Calu3 (cell line): ENCODE measurements at regions of chr15 and their contacts with region 1.

Region 1: GRCh38 chr15:65791335-65792129 is 561 bp downstream of the DENND4A start:
- DNase-seq: peak; percentile 49
- H3K4me3 Mint-ChIP-seq: peak overlapping the region; percentile 90
- H3K27ac Mint-ChIP-seq: peak overlapping the region; percentile 95
- H3K4me1 Mint-ChIP-seq: peaks cover 32% of the 10 kb centered on the region
- H3K27me3 Mint-ChIP-seq: no peaks in the 10 kb centered on the region
- CTCF ChIP-seq: no peak

Region 2: DNA sequence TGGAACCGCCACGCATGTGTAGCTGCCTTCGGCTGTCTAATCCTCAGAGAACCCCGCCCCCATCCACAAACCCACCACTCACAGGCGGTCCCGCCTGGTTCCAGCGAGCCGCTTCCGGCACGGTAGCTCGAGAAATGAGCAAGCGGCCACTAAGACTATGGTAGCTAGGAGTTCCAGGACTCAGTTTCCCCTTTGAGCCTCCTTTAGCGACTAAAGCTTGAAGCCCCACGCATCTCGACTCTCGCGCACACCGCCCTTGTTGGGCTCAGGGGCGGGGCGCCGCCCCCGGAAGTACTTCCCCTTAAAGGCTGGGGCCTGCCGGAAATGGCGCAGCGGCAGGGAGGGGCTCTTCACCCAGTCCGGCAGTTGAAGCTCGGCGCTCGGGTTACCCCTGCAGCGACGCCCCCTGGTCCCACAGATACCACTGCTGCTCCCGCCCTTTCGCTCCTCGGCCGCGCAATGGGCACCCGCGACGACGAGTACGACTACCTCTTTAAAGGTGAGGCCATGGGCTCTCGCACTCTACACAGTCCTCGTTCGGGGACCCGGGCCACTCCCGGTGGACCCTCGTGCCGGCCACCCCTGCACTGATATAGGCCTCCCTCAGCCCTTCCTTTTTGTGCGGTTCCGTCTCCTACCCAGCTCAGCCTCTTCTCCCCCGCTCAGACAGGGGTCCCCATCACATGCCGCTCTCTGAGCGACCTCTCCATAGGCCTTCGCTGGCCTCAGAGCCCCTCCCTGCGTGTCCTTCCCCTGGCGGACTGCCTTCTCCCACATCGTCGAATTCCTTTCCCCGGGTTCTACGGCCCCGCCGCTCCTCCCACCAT is 77.8 kb after region 1 on chr15 and contains the start of gene RAB11A:
- CTCF ChIA-PET with region 1: interaction called, 5 read pairs
- intact Hi-C with region 1: loop called (anchors 1 kb)
- DNase-seq: peak; percentile 97
- H3K4me3 Mint-ChIP-seq: peak within 1 kb of the TSS; percentile 96
- H3K27ac Mint-ChIP-seq: peak within 1 kb of the TSS; percentile 92
- H3K4me1 Mint-ChIP-seq: peaks cover 8% of the 10 kb centered on the region
- H3K27me3 Mint-ChIP-seq: no peaks in the 10 kb centered on the region
- CTCF ChIP-seq: peak; percentile 19
- total RNA-seq, gene RAB11A: 404 and 407 TPM in 2 replicates

Region 3: GRCh38 chr15:65939901-65940617 is 148.5 kb after region 1 on chr15:
- CTCF ChIA-PET with region 1: no interaction called
- intact Hi-C with region 1: no loop called
- DNase-seq: peak; percentile 89
- H3K4me3 Mint-ChIP-seq: no peak overlapping the region
- H3K27ac Mint-ChIP-seq: peak overlapping the region; percentile 88
- H3K4me1 Mint-ChIP-seq: peaks cover 38% of the 10 kb centered on the region
- H3K27me3 Mint-ChIP-seq: no peaks in the 10 kb centered on the region
- CTCF ChIP-seq: no peak